ENCODE measurements at regions of chr3 and their contacts with region 1.

Region 1: DNA sequence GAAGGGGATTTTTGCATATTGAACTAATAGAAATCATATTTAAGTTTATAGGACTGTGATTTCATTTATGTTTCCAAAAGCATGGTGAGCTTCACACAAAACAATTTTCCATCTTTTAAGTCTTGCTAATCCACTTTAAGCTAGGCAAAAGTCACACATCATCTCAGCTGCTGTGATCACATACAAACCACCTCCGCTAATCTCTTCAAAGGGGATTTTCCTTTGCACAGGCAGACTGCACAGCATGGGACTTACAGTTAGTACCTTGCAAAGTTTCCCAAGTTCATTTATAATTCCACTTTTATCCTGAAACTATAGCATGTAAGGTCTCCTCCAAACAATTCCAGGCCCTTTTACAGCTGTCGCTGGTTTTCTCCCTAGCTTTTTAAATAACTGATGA is 225.1 kb upstream of the CNTN3 start:
- DNase-seq: no peak
- H3K4me3 ChIP-seq: no peak overlapping the region
- H3K27ac ChIP-seq: no peak overlapping the region
- H3K4me1 ChIP-seq: no peaks in the 10 kb centered on the region
- H3K27me3 ChIP-seq: no peaks in the 10 kb centered on the region
- CTCF ChIP-seq: no peak
- POLR2A ChIP-seq: no peak

Region 2: GRCh38 chr3:76378789-76379188 is 1539.2 kb after region 1 on chr3:
- intact Hi-C with region 1: loop called (anchors 5 kb)
- DNase-seq: no peak
- H3K4me3 ChIP-seq: no peak overlapping the region
- H3K27ac ChIP-seq: no peak overlapping the region
- H3K4me1 ChIP-seq: no peaks in the 10 kb centered on the region
- H3K27me3 ChIP-seq: no peaks in the 10 kb centered on the region
- CTCF ChIP-seq: no peak
- POLR2A ChIP-seq: no peak

Measured in breast epithelium (tissue), 4 donors.